ENCODE measurements at regions of chr17 and their contacts with region 1.

Region 1: GRCh38 chr17:1724506-1725362 is at the start of gene WDR81:
- DNase-seq: peak; percentile 85
- H3K4me3 Mint-ChIP-seq: peak within 1 kb of the TSS; percentile 83
- H3K27ac Mint-ChIP-seq: peak within 1 kb of the TSS; percentile 78
- H3K4me1 Mint-ChIP-seq: peaks cover 30% of the 10 kb centered on the region
- H3K27me3 Mint-ChIP-seq: no peaks in the 10 kb centered on the region
- total RNA-seq, gene WDR81: 21.6 and 21.9 TPM in 2 replicates

Region 2: GRCh38 chr17:1684378-1685189 is 40.1 kb before region 1 on chr17 and contains the start of gene PRPF8:
- intact Hi-C with region 1: loop called (anchors 2 kb)
- DNase-seq: peak; percentile 98
- H3K4me3 Mint-ChIP-seq: peak within 1 kb of the TSS; percentile 97
- H3K27ac Mint-ChIP-seq: peak within 1 kb of the TSS; percentile 93
- H3K4me1 Mint-ChIP-seq: peaks cover 36% of the 10 kb centered on the region
- H3K27me3 Mint-ChIP-seq: no peaks in the 10 kb centered on the region
- total RNA-seq, gene PRPF8: 405 and 410 TPM in 2 replicates

Region 3: GRCh38 chr17:1764284-1764683 is 39.5 kb after region 1 on chr17:
- intact Hi-C with region 1: loop called (anchors 5 kb)
- DNase-seq: peak; percentile 74
- H3K4me3 Mint-ChIP-seq: peak overlapping the region; percentile 3
- H3K27ac Mint-ChIP-seq: peak overlapping the region; percentile 79
- H3K4me1 Mint-ChIP-seq: peaks cover 29% of the 10 kb centered on the region
- H3K27me3 Mint-ChIP-seq: no peaks in the 10 kb centered on the region

Region 4: DNA sequence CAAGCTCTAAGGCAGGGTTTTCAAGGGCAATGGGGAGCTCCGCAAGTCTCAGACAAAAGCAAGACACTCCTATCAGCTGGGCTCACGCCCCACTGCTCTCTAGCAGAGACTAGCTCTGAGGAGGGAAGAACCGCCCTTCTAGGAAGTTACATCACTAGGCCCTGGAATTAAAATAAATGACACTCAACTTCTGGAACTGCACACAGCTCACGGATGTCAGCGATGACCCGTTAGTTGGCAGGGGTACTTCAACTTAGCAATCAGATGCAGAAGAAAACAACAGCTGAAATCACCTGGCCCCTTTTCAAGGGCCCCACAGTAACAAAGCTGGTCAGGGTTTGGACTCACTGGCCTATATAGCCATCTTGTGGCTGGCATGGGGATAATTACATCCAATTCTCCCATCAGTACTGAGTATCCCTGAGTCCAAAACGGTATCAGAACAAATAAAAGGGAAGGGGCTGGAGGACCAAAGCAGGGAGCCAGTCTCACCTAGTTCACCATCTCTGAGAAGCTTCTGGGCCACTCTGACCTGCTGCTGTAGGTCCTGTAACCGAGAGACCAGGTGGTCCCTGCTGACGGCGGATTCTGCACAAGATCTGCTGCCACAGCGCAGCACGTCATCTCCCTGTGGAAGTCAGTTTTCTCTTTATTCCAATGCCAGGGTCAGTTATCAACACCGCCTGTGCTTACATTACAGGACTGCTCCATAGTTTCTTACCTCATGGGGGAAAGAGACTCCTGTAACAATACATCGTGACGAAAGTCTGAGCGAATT is 59.3 kb after region 1 on chr17:
- intact Hi-C with region 1: loop called (anchors 1 kb)
- DNase-seq: no peak
- H3K4me3 Mint-ChIP-seq: no peak overlapping the region
- H3K27ac Mint-ChIP-seq: peak overlapping the region; percentile 44
- H3K4me1 Mint-ChIP-seq: peaks cover 10% of the 10 kb centered on the region
- H3K27me3 Mint-ChIP-seq: no peaks in the 10 kb centered on the region

Region 5: GRCh38 chr17:1796800-1797199 is 72.1 kb after region 1 on chr17:
- intact Hi-C with region 1: no loop called
- DNase-seq: no peak
- H3K4me3 Mint-ChIP-seq: no peak overlapping the region
- H3K27ac Mint-ChIP-seq: no peak overlapping the region
- H3K4me1 Mint-ChIP-seq: peaks cover 9% of the 10 kb centered on the region
- H3K27me3 Mint-ChIP-seq: no peaks in the 10 kb centered on the region

Region 6: DNA sequence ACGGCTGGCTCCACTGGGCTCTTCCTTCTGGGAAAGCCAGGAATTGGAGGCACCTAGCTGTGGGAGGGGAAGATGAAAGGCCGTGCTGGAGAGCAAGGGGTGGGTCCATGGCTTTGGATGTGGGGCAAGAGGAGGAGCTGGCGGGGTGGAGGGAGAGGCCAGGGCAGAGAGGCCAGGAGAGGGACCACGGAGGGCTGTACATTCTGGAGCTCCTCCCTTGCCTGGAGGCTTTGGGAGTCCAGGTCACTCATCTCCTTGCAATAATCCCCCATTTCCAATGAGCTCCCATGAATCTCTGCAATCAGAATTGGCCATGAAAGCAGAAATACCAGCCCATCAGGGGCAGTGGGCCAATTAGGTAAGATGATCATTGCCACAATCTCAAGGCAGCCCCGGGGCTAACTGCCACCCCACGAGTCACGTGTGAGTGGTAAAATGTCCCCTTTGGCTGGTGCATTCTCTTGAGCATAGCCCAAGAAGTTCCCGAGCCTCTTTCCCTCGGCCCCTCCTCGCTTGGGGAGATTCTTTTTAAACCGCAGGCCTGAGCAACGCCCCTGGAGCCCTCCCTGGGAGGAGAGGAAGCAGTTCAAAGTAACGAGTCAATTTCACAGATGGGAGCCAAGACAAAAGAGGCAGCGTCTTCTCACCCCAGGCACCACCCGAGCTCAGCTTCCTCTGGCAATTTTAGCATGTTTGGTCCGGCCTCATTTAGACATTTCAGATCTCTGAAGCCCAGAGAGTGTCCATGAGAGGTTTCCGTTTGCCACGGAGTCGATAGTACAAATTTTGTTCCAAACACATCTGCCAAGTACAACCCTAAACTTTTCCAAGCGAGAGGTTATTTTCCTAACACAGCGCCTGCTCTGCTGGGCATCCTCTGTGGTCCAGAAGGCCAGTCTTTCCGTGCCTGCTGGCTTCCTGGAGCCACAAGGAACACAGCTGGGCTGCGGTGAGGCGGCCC is 287.0 kb after region 1 on chr17:
- intact Hi-C with region 1: no loop called
- DNase-seq: no peak
- H3K4me3 Mint-ChIP-seq: no peak overlapping the region
- H3K27ac Mint-ChIP-seq: no peak overlapping the region
- H3K4me1 Mint-ChIP-seq: peaks cover 5% of the 10 kb centered on the region
- H3K27me3 Mint-ChIP-seq: peaks cover 9% of the 10 kb centered on the region

Measured in activated T-helper 1 cell treated with anti-CD3 and anti-CD28 coated beads, Interleukin-12 subunit alpha, Interleukin-12 subunit beta, Interleukin-2, Interleukin-4 antibody, amounts not matched to agents 30 ng/mL and 10 ng/mL and 1 ng/mL, durations not matched to agents 14 hours and 24 hours and 36 hours (primary cell).